WTC11 (cell line): ENCODE measurements at regions of chr1 and their contacts with region 1.

Region 1: GRCh38 chr1:44036409-44037139 is 5.3 kb upstream of the SLC6A9 start:
- DNase-seq: peak; percentile 80
- ATAC-seq: peak; percentile 64
- H3K4me3 Mint-ChIP-seq: no peak overlapping the region
- H3K27ac Mint-ChIP-seq: no peak overlapping the region
- H3K4me1 Mint-ChIP-seq: peaks cover 26% of the 10 kb centered on the region
- H3K27me3 Mint-ChIP-seq: peaks cover 4% of the 10 kb centered on the region
- CTCF ChIP-seq: peak; percentile 55; the same call in 1 of the 2 replicates

Region 2: DNA sequence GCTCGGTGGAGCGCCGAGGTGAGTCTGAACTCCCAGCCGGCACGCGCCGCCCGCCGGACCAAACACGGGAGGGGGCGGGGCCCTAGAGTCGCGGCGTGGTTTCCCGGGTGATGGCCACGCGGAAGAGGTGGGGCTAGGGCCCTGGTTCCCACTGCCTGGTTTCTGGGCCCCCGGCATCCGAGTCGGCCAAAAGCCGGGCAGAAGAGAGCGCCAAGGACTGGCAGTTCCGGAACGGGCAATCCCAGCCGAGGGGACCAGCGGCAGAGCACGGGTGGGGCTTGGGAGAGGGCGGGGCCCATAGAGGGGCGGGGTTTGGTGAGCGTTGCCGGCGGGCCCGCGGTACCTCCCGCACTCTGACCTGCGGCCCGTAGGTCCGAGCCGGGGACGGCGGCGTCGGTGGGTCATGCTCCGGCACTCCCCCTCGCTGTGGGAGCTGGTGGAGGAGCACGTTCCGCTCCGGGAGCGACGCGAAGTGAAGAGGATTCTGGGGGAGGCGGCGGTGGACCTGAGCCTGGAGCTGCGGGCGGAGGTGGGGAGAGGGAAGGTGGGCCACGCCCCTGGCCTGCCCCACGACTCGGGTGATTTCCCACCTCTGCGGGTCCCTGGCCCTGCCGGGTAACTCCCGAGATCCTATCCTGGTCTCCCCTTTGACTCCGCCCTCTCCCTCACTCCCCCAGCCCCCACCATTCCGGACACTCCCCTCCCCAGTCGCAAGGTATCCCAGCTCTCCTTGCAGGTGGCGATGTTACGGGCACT is 44.9 kb before region 1 on chr1 and contains the start of gene CCDC24:
- CTCF ChIA-PET with region 1: interaction called, 87 read pairs
- POLR2A ChIA-PET with region 1: interaction called, 4 read pairs
- DNase-seq: peak; percentile 82
- ATAC-seq: peak; percentile 70
- H3K4me3 Mint-ChIP-seq: peak within 1 kb of the TSS; percentile 86
- H3K27ac Mint-ChIP-seq: peak within 1 kb of the TSS; percentile 93
- H3K4me1 Mint-ChIP-seq: peaks cover 22% of the 10 kb centered on the region
- H3K27me3 Mint-ChIP-seq: peaks cover 18% of the 10 kb centered on the region
- CTCF ChIP-seq: no peak
- total RNA-seq, gene CCDC24: 12.1 to 20.1 TPM (median 19.2 TPM) in 3 replicates

Region 3: GRCh38 chr1:43997295-43997999 is 39.1 kb before region 1 on chr1:
- CTCF ChIA-PET with region 1: interaction called, 132 read pairs
- POLR2A ChIA-PET with region 1: interaction called, 4 read pairs
- DNase-seq: no peak
- ATAC-seq: no peak
- H3K4me3 Mint-ChIP-seq: no peak overlapping the region
- H3K27ac Mint-ChIP-seq: no peak overlapping the region
- H3K4me1 Mint-ChIP-seq: peaks cover 18% of the 10 kb centered on the region
- H3K27me3 Mint-ChIP-seq: peaks cover 13% of the 10 kb centered on the region
- CTCF ChIP-seq: no peak

Region 4: DNA sequence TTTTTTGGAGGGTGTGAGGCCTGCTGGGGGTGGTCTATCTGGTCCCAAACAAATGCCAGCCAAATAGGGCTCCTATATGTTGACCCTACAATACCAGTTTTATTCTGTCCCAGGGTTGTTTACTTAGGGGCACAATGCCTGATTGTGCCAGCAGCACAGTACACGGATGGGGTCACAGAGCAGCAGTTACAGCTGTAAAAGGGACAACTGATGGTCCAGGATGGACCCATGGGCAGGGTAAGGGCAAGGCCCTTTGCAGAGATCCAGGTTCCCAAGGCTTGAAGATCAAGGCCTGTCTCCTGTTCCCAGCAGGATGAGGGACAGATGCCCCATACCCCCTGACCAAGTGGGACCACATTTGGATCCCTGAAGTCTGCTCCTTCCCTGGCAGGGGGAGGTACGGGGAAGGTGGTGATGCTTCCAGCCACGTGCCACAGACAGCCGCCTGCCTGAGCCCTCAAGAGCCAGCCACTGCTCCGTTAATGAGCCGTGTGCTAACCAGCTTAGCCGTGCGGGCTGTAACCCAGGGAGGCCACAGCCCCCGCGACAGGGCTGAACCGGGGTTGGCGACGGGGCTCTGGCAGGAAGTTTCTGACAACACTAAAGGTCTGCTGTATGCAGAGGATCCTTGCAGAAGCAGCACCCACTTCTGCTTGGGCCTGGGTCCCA is 23.5 kb before region 1 on chr1:
- CTCF ChIA-PET with region 1: interaction called, 132 read pairs
- POLR2A ChIA-PET with region 1: no interaction called
- DNase-seq: no peak
- ATAC-seq: no peak
- H3K4me3 Mint-ChIP-seq: no peak overlapping the region
- H3K27ac Mint-ChIP-seq: no peak overlapping the region
- H3K4me1 Mint-ChIP-seq: peaks cover 7% of the 10 kb centered on the region
- H3K27me3 Mint-ChIP-seq: no peaks in the 10 kb centered on the region
- CTCF ChIP-seq: no peak

Region 5: GRCh38 chr1:44021581-44022321 is 14.8 kb before region 1 on chr1:
- CTCF ChIA-PET with region 1: interaction called, 35 read pairs
- POLR2A ChIA-PET with region 1: no interaction called
- DNase-seq: no peak
- ATAC-seq: no peak; the same call in 1 of the 2 replicates
- H3K4me3 Mint-ChIP-seq: no peak overlapping the region
- H3K27ac Mint-ChIP-seq: no peak overlapping the region
- H3K4me1 Mint-ChIP-seq: peaks cover 10% of the 10 kb centered on the region
- H3K27me3 Mint-ChIP-seq: no peaks in the 10 kb centered on the region
- CTCF ChIP-seq: no peak